ENCODE measurements at regions of chr15 and their contacts with region 1.

Region 1: DNA sequence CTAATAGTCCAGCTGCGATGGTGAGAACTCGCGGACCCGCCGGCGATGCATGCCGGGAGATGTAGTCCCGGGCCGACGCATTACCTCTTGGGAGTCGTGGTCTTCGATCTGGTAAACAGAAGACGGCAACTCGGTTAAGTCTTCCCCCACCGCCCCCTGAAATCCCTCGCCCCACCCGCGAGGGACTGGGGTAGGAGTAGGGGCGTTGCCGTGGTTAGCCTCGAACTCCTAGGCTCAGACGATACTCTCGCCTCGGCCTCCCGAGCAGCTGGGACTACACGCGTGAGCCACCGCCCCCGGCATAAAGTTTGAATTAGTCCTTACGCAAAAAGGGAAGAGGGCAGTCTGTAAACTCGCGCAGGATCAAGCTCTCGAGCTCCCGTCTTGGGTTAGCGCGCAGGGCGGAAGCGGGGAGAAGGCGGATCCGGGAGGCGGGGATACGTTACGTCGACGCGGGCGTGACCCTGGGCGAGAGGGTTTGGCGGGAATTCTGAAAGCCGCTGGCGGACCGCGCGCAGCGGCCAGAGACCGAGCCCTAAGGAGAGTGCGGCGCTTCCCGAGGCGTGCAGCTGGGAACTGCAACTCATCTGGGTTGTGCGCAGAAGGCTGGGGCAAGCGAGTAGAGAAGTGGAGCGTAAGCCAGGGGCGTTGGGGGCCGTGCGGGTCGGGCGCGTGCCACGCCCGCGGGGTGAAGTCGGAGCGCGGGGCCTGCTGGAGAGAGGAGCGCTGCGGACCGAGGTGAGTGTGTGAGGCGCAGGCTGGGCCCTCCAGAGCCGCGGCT is at the start of gene RAD51:
- DNase-seq: peak; percentile 94
- ATAC-seq: peak; percentile 98 to 99 (median 99)
- H3K4me3 ChIP-seq: peak within 1 kb of the TSS; percentile 52 to 90 (median 84)
- H3K27ac ChIP-seq: peak within 1 kb of the TSS; percentile 94 to 100 (median 98)
- H3K4me1 ChIP-seq: peaks cover 0 to 24% (median 18%) of the 10 kb centered on the region in 9 donors
- H3K27me3 ChIP-seq: no peaks in the 10 kb centered on the region
- CTCF ChIP-seq: peak in 1 of 9 donors; percentile 18
- total RNA-seq, gene RAD51: 0.30 to 3.6 (median 0.76) TPM

Region 2: DNA sequence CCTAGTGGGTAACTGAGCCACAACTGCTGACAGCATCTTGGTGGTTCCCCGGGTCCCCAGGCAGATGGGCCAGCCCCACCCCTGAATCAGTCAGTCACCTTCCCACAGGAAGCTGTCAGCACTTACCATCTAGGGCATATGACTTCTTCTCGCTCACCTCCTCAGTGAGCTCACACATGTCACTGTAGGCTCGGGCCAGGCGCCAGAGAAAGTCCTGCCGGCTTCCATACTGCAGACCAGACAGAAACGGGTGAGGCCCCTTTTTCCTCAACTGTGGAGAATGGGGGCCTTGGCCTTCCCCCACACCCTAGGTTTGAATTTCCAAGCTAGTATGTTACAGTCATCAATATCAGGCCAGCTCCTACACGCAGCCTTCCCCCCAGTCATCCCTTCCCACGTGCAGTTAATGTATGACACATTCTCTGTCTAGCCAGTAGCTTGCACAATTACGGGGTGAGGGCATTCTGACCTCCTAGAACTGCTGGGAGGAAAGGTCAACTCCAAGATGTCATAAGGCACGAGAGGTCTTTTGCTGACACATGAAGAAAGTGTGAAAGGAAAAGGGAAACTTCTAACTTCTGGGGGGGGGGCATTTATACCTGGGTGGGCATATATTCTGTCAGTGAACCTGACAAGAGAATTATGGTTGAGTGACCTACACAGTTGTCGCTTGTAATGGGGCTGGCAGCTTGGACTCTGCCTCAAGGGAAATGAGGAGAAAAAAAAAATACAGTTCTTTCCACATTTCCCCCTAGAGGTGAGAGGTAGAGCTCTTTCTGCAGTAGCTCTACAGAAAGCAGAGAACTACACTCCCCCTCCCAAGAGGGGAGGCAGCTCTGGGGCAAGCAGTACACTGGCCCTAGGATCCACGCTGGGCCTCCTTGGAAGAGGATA is 49.3 kb after region 1 on chr15:
- intact Hi-C with region 1: loop called in 1 of 10 experiments (anchors 5 kb)
- DNase-seq: no peak
- ATAC-seq: peak in 7 of 8 donors; percentile 34 to 76 (median 65)
- H3K4me3 ChIP-seq: no peak overlapping the region
- H3K27ac ChIP-seq: peak overlapping the region in 1 of 10 donors; percentile 68
- H3K4me1 ChIP-seq: peaks cover 0 to 45% (median 0%) of the 10 kb centered on the region in 9 donors
- H3K27me3 ChIP-seq: no peaks in the 10 kb centered on the region
- CTCF ChIP-seq: no peak

Region 3: GRCh38 chr15:40754883-40755811 is 60.3 kb after region 1 on chr15 and contains the start of gene RMDN3:
- intact Hi-C with region 1: loop called in 2 of 10 experiments (anchors 1 to 5 kb)
- DNase-seq: peak; percentile 90 to 94
- ATAC-seq: peak; percentile 98 to 100 (median 98)
- H3K4me3 ChIP-seq: peak within 1 kb of the TSS; percentile 74 to 96 (median 90)
- H3K27ac ChIP-seq: peak within 1 kb of the TSS in 9 of 10 donors; percentile 75 to 89 (median 82)
- H3K4me1 ChIP-seq: peaks cover 0 to 27% (median 17%) of the 10 kb centered on the region in 9 donors
- H3K27me3 ChIP-seq: no peaks in the 10 kb centered on the region
- CTCF ChIP-seq: peak in 3 of 9 donors; percentile 19 to 37 (median 21)
- total RNA-seq, gene RMDN3: 12.2 to 20.9 (median 17.6) TPM

Region 4: GRCh38 chr15:40807028-40807887 is 112.4 kb after region 1 on chr15 and contains the starts of genes DNAJC17 and ZFYVE19:
- intact Hi-C with region 1: loop called in 1 of 10 experiments (anchors 1 kb)
- DNase-seq: peak; percentile 95 to 99
- ATAC-seq: peak; percentile 99
- H3K4me3 ChIP-seq: peak within 1 kb of the TSS; percentile 70 to 96 (median 88)
- H3K27ac ChIP-seq: peak within 1 kb of the TSS; percentile 80 to 99 (median 96)
- H3K4me1 ChIP-seq: peaks cover 3 to 56% (median 26%) of the 10 kb centered on the region in 9 donors
- H3K27me3 ChIP-seq: no peaks in the 10 kb centered on the region
- CTCF ChIP-seq: peak in 3 of 9 donors; percentile 18 to 31 (median 21)
- total RNA-seq, gene DNAJC17: 9.9 to 17.7 (median 14.7) TPM
- total RNA-seq, gene ZFYVE19: 14.2 to 29.2 (median 18.2) TPM

Region 5: GRCh38 chr15:41125931-41126642 is 431.2 kb after region 1 on chr15:
- intact Hi-C with region 1: no loop called
- DNase-seq: no peak
- ATAC-seq: no peak
- H3K4me3 ChIP-seq: no peak overlapping the region
- H3K27ac ChIP-seq: no peak overlapping the region
- H3K4me1 ChIP-seq: no peaks in the 10 kb centered on the region
- H3K27me3 ChIP-seq: peaks cover 0 to 26% (median 8%) of the 10 kb centered on the region in 7 donors
- CTCF ChIP-seq: no peak